Gastrocnemius medialis (tissue), 4 donors: ENCODE measurements at regions of chr18 and their contacts with region 1.

Region 1: DNA sequence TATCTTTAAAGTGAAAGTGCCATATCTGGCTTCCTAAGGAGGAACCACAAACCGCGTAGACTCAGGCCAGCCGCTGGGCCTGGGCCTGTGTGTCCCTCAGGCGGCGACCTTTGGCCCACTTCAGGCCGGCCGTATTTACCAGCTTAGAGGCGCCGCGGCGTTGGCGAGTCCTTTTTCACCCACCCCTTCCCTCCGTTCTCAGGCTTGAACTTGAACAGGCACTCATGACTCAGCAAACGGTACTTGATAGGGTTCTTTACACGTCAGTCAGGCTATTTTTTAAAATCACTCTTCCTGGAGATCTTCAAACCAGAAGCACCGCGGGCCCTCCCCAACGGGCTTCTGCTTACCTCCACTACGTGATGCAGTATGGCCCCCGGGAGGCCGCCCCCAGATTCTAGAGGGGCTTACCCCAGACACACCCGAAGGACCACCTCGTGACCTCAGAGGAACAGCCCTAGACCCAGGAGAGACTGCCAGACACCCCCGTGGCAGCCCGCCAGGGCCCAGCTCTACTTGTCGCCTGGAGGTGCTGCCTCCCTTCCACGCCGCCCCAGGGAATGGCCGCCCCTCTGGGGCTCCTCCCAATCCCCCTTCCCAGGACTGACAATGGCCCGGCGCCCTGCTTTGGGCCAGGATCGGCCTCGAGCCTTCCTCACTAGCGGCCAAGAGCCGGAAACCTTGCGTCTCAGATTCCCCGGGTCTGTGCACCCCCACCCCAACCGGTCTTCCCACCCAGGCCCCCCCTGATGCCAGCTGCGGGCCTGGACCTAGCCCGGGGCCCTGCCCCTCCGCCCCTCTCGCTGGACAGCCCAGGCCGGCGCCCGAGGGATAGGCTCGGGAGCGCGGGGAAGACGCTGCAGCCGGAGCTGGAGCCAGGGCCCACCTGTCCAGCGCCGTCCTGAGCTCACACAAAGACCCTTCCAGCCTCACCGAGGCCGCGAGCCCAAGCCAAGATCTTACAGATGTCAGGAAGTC is 33.8 kb upstream of the IMPA2 start:
- DNase-seq: peak; percentile 95
- ATAC-seq: peak; percentile 85 to 92
- H3K4me3 ChIP-seq: peak overlapping the region; percentile 60 to 75 (median 68)
- H3K27ac ChIP-seq: peak overlapping the region; percentile 91 to 100 (median 96)
- H3K4me1 ChIP-seq: peaks cover 24 to 35% of the 10 kb centered on the region in 2 donors
- H3K27me3 ChIP-seq: no peaks in the 10 kb centered on the region
- CTCF ChIP-seq: peak in 1 of 5 experiments; percentile 9
- POLR2A ChIP-seq: peak; percentile 67 to 79

Region 2: GRCh38 chr18:11908182-11909060 is 39.1 kb before region 1 on chr18 and contains the start of gene MPPE1:
- in situ Hi-C with region 1: no loop called
- intact Hi-C with region 1: loop called (anchors 2 kb)
- DNase-seq: peak; percentile 79 to 87
- ATAC-seq: peak; percentile 92 to 93
- H3K4me3 ChIP-seq: peak within 1 kb of the TSS; percentile 67 to 98 (median 80)
- H3K27ac ChIP-seq: peak within 1 kb of the TSS; percentile 92 to 100 (median 98)
- H3K4me1 ChIP-seq: peaks cover 11 to 16% of the 10 kb centered on the region in 2 donors
- H3K27me3 ChIP-seq: no peaks in the 10 kb centered on the region
- CTCF ChIP-seq: peak in 1 of 5 experiments; percentile 9
- POLR2A ChIP-seq: peak; percentile 92 to 96
- total RNA-seq, gene MPPE1: 11.0 to 33.6 (median 24.8) TPM

Region 3: DNA sequence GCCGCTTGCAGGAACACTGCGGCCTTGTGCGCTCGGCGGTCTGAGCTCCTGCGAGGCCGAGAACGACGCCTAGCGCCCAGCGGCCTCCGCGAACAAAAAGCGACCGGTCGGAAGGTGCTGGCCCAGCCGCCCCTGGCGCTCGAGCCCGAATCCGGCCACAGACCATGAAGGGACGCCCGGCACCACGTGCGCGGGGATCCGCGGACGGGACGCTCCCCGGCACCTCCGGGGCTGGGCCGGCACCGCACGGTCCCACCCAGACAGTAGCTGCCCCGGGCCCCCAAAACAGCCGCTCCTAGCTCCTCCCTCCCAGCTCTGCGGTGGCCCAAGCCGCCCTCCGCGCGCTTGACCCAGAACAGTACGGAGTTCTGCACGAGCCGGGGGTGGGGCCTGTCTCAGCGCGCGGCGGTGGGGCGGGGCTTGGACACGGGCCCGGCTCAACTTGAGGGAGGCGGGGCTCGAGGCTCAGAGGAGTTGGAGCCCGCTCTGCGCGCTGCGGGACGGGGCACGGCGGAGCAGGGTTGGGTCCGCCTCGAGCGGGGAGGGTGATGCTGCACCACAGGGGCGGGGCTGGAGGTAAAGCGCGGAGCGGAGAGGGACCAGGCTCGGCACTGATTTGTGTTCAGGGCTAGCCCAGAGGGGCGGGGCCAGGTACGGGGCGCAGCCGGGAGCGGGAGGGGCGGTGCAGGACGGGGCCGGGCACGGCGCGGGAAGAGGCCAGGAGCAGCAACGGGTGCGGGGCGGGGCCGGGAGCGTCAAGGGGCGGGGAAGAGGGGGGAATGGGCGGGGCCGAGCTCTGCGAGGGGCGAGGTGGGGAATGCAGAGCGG is 33.3 kb after region 1 on chr18:
- in situ Hi-C with region 1: no loop called
- intact Hi-C with region 1: loop called (anchors 1 kb)
- DNase-seq: peak; percentile 99
- ATAC-seq: peak; percentile 67 to 72
- H3K4me3 ChIP-seq: peak overlapping the region; percentile 71 to 94 (median 86)
- H3K27ac ChIP-seq: peak overlapping the region; percentile 97 to 100 (median 99)
- H3K4me1 ChIP-seq: peaks cover 21 to 38% of the 10 kb centered on the region in 2 donors
- H3K27me3 ChIP-seq: no peaks in the 10 kb centered on the region
- CTCF ChIP-seq: peak in 4 of 5 experiments; percentile 14 to 41 (median 21)
- POLR2A ChIP-seq: peak; percentile 98 to 99

Region 4: GRCh38 chr18:12345491-12346239 is 398.2 kb after region 1 on chr18:
- in situ Hi-C with region 1: no loop called
- intact Hi-C with region 1: no loop called
- DNase-seq: no peak
- ATAC-seq: no peak
- H3K4me3 ChIP-seq: no peak overlapping the region
- H3K27ac ChIP-seq: no peak overlapping the region
- H3K4me1 ChIP-seq: no peaks in the 10 kb centered on the region
- H3K27me3 ChIP-seq: no peaks in the 10 kb centered on the region
- CTCF ChIP-seq: no peak
- POLR2A ChIP-seq: no peak